H1 (cell line): ENCODE measurements at regions of chr3 and their contacts with region 1.

Region 1: GRCh38 chr3:44870381-44871078 is 3.9 kb upstream of the TGM4 start:
- DNase-seq: no peak
- H3K4me3 ChIP-seq: no peak overlapping the region
- H3K27ac ChIP-seq: no peak overlapping the region
- H3K4me1 ChIP-seq: no peaks in the 10 kb centered on the region
- H3K27me3 ChIP-seq: no peaks in the 10 kb centered on the region
- CTCF ChIP-seq: no peak
- EP300 ChIP-seq: no peak
- POLR2A ChIP-seq: no peak
- RAD21 ChIP-seq: no peak

Region 2: GRCh38 chr3:44833394-44833793 is 37.1 kb before region 1 on chr3:
- CTCF ChIA-PET with region 1: no interaction called
- POLR2A ChIA-PET with region 1: no interaction called
- DNase-seq: no peak
- H3K4me3 ChIP-seq: no peak overlapping the region
- H3K27ac ChIP-seq: no peak overlapping the region
- H3K4me1 ChIP-seq: no peaks in the 10 kb centered on the region
- H3K27me3 ChIP-seq: no peaks in the 10 kb centered on the region
- CTCF ChIP-seq: no peak
- EP300 ChIP-seq: no peak
- POLR2A ChIP-seq: no peak
- RAD21 ChIP-seq: no peak

Region 3: GRCh38 chr3:44883999-44884431 is 13.5 kb after region 1 on chr3:
- CTCF ChIA-PET with region 1: interaction called, 17 read pairs
- POLR2A ChIA-PET with region 1: interaction called, 5 read pairs
- DNase-seq: no peak
- H3K4me3 ChIP-seq: no peak overlapping the region; a peak in 1 of 8 replicates
- H3K27ac ChIP-seq: no peak overlapping the region
- H3K4me1 ChIP-seq: peaks cover 0 to 2% (median 0%) of the 10 kb centered on the region in 4 experiments; a peak in 2 of 7 replicates
- H3K27me3 ChIP-seq: no peaks in the 10 kb centered on the region
- CTCF ChIP-seq: no peak
- EP300 ChIP-seq: no peak
- POLR2A ChIP-seq: no peak
- RAD21 ChIP-seq: no peak

Region 4: DNA sequence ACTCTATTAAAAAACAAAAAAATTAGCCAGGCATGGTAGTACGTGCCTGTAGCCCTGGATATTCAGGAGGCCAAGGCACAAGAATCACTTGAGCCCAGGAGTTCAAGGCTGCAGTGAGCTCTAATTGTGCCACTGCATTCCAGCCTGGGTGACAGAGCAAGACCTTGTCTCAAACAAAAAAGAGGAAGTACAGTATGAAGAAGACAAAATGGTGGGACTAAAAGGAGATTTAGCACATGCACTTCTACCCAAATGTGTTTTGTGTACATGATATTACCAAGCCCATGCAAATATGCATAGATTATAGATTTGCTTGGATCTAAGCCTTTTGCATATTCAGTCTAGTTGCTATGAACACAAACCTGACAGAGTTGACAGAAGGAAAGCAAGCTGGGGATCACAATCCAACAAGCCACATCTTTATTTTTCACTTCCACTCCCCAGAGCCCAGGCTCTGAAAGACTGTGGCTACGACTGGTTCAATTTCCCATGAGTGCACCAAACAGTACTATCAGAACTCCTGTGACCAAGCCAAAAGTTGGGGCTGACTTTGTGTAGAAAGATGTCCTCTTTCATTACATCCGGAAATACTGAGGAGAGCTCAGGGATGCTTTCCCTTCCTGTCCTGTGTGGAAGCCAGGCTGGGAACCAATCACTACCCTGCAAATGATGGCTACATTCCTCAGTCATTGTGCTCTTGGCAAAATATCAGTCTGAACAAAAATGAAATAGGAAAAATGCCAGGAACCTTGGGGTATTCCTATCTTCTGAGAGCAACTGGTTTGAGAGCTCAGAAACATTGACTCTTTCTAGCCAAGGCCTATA is 53.3 kb after region 1 on chr3:
- CTCF ChIA-PET with region 1: no interaction called
- POLR2A ChIA-PET with region 1: no interaction called
- DNase-seq: no peak
- H3K4me3 ChIP-seq: no peak overlapping the region
- H3K27ac ChIP-seq: no peak overlapping the region
- H3K4me1 ChIP-seq: no peaks in the 10 kb centered on the region
- H3K27me3 ChIP-seq: no peaks in the 10 kb centered on the region
- CTCF ChIP-seq: no peak
- EP300 ChIP-seq: no peak
- POLR2A ChIP-seq: no peak
- RAD21 ChIP-seq: no peak